Right ventricle myocardium inferior (tissue), 1 donor: ENCODE measurements at regions of chrX and their contacts with region 1.

Region 1: GRCh38 chrX:72121383-72121782 is 10.3 kb downstream of the RTL5 start:
- DNase-seq: no peak
- ATAC-seq: peak; percentile 80

Region 2: GRCh38 chrX:72079607-72080006 is 41.8 kb before region 1 on chrX:
- intact Hi-C with region 1: loop called (anchors 2 kb)
- DNase-seq: no peak
- ATAC-seq: peak; percentile 74